ENCODE measurements at regions of chr2 and their contacts with region 1.

Region 1: GRCh38 chr2:44802777-44803424 is 138.6 kb upstream of the SIX3 start:
- DNase-seq: no peak
- ATAC-seq: no peak
- H3K4me3 Mint-ChIP-seq: no peak overlapping the region
- H3K27ac Mint-ChIP-seq: no peak overlapping the region
- H3K4me1 Mint-ChIP-seq: peaks cover 14% of the 10 kb centered on the region
- H3K27me3 Mint-ChIP-seq: peaks cover 77% of the 10 kb centered on the region

Region 2: DNA sequence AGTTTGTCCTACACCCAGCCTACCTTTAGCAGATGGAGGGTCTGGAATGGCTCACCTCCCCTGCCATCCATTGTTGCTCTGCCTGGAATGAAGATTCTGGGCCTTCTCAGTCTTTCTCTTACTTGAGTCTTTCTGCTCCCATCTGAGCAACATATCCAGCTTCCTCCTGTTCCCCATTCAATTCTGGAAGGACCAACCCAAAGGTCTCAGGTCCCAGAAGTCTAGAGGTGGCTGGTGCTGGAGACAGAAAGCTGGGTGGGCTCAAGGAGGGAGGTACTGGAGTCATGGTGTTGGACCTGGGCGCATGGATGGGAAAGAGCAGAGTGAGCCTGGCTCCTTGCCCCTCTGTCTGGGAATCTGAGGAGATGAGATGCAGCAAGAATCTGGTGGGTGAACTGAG is 45.1 kb after region 1 on chr2:
- CTCF ChIA-PET with region 1: no interaction called
- POLR2A ChIA-PET with region 1: no interaction called
- intact Hi-C with region 1: no loop called
- DNase-seq: no peak
- ATAC-seq: no peak
- H3K4me3 Mint-ChIP-seq: no peak overlapping the region
- H3K27ac Mint-ChIP-seq: no peak overlapping the region
- H3K4me1 Mint-ChIP-seq: peaks cover 8% of the 10 kb centered on the region
- H3K27me3 Mint-ChIP-seq: peaks cover 46% of the 10 kb centered on the region

Region 3: DNA sequence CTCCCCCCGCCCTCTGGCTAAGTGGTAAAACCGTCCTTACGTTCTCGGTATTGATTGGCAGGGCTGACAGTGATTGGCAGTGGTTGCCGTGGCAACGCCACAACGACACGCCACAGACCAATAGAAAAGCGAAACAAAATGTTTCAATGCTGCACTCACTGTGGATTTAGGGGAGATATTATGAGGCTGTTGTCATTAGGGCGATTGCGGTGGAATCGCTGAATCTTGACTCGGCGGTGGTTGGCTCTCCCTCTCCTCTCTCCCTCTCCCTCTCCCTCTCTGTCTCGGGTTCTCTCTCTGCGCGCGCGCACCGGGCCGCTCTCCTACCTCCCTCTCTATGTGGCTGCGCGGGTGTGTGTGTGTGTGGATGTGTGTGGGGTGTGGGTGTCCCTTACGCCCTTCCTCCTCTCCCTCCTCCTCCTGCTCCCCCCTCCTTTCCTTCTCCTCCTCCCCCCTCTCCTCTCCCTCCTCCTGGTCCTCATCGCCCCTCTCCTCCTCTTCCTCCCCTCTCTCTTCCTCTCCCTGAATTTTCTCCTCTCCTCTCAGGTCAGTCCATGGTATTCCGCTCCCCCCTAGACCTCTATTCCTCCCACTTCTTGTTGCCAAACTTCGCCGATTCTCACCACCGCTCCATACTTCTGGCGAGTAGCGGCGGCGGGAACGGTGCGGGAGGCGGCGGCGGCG is 138.8 kb after region 1 on chr2 and contains the start of gene SIX3:
- CTCF ChIA-PET with region 1: no interaction called
- POLR2A ChIA-PET with region 1: no interaction called
- intact Hi-C with region 1: loop called in 1 of 2 experiments (anchors 5 kb)
- DNase-seq: peak; percentile 74
- ATAC-seq: peak; percentile 69
- H3K4me3 Mint-ChIP-seq: peak within 1 kb of the TSS; percentile 70
- H3K27ac Mint-ChIP-seq: no peak within 1 kb of the TSS
- H3K4me1 Mint-ChIP-seq: peaks cover 37% of the 10 kb centered on the region
- H3K27me3 Mint-ChIP-seq: peaks cover 76% of the 10 kb centered on the region
- total RNA-seq, gene SIX3: not detected

Region 4: DNA sequence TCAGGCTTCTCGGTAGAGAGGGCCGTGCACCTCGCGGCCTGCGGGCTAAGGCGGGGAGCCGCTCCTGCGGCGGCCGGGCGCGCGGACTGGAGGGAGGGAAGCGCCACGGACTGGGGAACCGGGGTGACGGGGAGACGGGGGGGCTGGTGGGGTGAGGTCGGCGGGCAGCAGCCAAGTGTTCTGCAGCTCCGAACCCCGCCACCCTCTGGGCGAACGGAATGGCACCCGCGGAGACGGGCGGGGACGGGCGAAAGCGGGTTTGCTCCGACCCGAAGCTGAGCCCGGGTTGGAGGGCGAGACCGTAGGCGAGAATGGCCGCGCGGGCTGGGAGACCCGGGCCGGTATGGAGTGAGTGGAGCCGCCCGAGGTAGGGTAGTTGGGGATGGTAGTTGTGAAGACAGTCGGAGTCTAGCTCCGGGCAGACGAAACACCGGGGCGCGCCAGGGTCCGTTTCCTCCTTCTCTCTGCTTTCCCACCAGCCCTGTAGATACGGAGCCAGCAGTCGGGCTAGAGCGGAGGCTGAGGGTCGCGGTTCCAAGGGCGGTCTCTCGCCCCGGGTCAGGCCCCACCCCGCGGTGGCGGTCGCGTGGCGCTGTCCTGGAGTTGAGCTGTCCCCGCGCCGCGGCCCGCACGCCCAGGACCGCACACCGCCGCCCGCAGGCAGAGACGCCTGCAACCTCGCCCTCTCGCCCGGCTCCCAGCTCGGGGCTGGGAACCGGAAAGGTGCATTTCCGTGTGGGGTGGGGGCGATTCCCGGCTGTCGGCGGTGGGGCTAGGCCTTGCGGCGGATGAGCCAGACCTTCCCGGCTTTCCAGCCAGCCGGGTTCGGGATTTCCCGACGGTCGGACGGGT is 366.7 kb after region 1 on chr2:
- CTCF ChIA-PET with region 1: no interaction called
- POLR2A ChIA-PET with region 1: no interaction called
- intact Hi-C with region 1: loop called in 1 of 2 experiments (anchors 10 kb)
- DNase-seq: peak; percentile 21
- ATAC-seq: peak; percentile 26
- H3K4me3 Mint-ChIP-seq: peak overlapping the region; percentile 50
- H3K27ac Mint-ChIP-seq: no peak overlapping the region
- H3K4me1 Mint-ChIP-seq: peaks cover 4% of the 10 kb centered on the region
- H3K27me3 Mint-ChIP-seq: peaks cover 57% of the 10 kb centered on the region